Activated CD4-positive, alpha-beta memory T cell treated with anti-CD3 and anti-CD28 coated beads for 36 hours (primary cell): ENCODE measurements at regions of chr12 and their contacts with region 1.

Region 1: GRCh38 chr12:120961604-120962531 is 16.5 kb upstream of the HNF1A start:
- DNase-seq: no peak
- H3K4me3 Mint-ChIP-seq: no peak overlapping the region
- H3K27ac Mint-ChIP-seq: no peak overlapping the region
- H3K4me1 Mint-ChIP-seq: peaks cover 36% of the 10 kb centered on the region
- H3K27me3 Mint-ChIP-seq: no peaks in the 10 kb centered on the region

Region 2: DNA sequence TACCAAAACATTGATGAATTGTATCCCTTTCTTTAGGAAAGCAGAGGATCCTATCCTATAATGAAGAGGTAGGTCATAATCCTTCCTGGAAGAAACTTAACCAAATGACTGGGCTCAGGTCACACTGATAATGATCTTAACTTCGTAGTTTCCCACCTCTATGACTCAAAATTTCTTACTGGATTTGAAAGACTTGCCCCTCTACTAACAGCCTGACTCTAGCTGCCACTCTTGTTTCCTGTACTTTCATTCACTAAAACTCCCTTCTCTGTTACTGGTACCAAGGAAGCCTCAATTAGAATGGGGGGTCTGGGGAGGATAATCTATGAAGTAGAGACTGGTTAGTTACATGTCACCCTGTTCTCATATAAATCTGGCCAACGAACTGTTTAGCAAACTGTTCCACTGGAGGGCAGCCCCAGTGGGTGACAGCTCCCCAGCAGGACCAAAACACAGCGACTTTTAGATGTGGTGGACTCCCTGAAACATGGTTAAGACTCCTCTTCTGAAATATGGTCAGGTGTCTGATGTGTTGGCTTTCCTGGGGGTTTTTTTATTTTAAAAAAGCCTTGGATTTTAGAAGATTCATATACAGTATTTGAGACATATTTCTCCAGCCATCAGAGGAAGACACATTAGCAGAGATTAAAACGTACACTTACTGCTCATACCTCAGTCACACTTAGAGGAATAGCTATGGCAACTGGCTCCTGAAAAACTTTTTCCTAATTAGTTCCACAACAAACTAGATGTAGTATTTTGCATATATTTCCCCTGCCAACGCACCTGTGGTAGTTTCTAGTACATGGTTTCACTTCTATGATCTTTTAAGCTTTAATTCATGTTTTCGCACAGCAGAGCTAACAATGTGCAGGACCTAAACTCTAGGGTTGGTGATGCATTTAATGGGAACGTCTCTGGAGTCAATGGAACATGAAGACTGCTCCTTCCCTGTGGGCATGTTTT is 163.9 kb before region 1 on chr12:
- CTCF ChIA-PET with region 1: no interaction called
- POLR2A ChIA-PET with region 1: no interaction called
- intact Hi-C with region 1: loop called (anchors 5 kb)
- DNase-seq: peak; percentile 21
- H3K4me3 Mint-ChIP-seq: no peak overlapping the region
- H3K27ac Mint-ChIP-seq: peak overlapping the region; percentile 82
- H3K4me1 Mint-ChIP-seq: peaks cover 59% of the 10 kb centered on the region
- H3K27me3 Mint-ChIP-seq: no peaks in the 10 kb centered on the region

Region 3: DNA sequence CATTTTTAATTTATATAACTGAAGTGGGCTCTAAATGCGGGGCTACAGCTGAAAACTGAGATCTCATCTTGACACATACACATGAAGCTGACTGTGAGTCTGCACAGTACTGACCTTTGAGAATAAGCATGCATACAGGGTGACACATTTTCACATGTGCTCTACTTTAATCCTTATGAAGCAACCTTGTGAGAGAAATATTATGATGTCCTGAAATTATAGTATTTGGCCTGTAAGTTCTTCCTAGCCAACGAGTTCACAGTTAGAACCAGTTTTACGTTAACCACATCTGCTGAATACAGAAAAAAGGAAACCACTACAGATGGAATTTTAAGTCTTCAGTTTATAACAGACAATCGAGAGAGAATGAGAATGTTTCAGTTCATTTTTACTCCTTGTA is 128.0 kb before region 1 on chr12:
- CTCF ChIA-PET with region 1: no interaction called
- POLR2A ChIA-PET with region 1: no interaction called
- intact Hi-C with region 1: no loop called
- DNase-seq: no peak
- H3K4me3 Mint-ChIP-seq: no peak overlapping the region
- H3K27ac Mint-ChIP-seq: no peak overlapping the region
- H3K4me1 Mint-ChIP-seq: peaks cover 67% of the 10 kb centered on the region
- H3K27me3 Mint-ChIP-seq: no peaks in the 10 kb centered on the region

Region 4: GRCh38 chr12:120856980-120857379 is 104.9 kb before region 1 on chr12:
- CTCF ChIA-PET with region 1: no interaction called
- POLR2A ChIA-PET with region 1: no interaction called
- intact Hi-C with region 1: loop called (anchors 5 kb)
- DNase-seq: no peak
- H3K4me3 Mint-ChIP-seq: no peak overlapping the region
- H3K27ac Mint-ChIP-seq: no peak overlapping the region
- H3K4me1 Mint-ChIP-seq: peaks cover 34% of the 10 kb centered on the region
- H3K27me3 Mint-ChIP-seq: no peaks in the 10 kb centered on the region

Region 5: GRCh38 chr12:121033625-121034349 is 71.9 kb after region 1 on chr12:
- CTCF ChIA-PET with region 1: no interaction called
- POLR2A ChIA-PET with region 1: no interaction called
- intact Hi-C with region 1: loop called (anchors 1 kb)
- DNase-seq: peak; percentile 80
- H3K4me3 Mint-ChIP-seq: peak overlapping the region; percentile 10
- H3K27ac Mint-ChIP-seq: peak overlapping the region; percentile 72
- H3K4me1 Mint-ChIP-seq: peaks cover 58% of the 10 kb centered on the region
- H3K27me3 Mint-ChIP-seq: no peaks in the 10 kb centered on the region

Region 6: GRCh38 chr12:121560392-121561008 is 598.6 kb after region 1 on chr12:
- CTCF ChIA-PET with region 1: no interaction called
- POLR2A ChIA-PET with region 1: no interaction called
- intact Hi-C with region 1: no loop called
- DNase-seq: no peak
- H3K4me3 Mint-ChIP-seq: no peak overlapping the region
- H3K27ac Mint-ChIP-seq: peak overlapping the region; percentile 23
- H3K4me1 Mint-ChIP-seq: peaks cover 15% of the 10 kb centered on the region
- H3K27me3 Mint-ChIP-seq: no peaks in the 10 kb centered on the region